ENCODE measurements at regions of chr9 and their contacts with region 1.

Region 1: GRCh38 chr9:132877824-132878694 is at the start of gene AK8:
- DNase-seq: peak in 1 of 2 donors; percentile 82
- H3K4me3 ChIP-seq: peak within 1 kb of the TSS; percentile 78 to 81
- H3K27ac ChIP-seq: peak within 1 kb of the TSS; percentile 64 to 71
- H3K4me1 ChIP-seq: peaks cover 3 to 8% of the 10 kb centered on the region in 2 donors
- H3K27me3 ChIP-seq: no peaks in the 10 kb centered on the region
- CTCF ChIP-seq: no peak
- total RNA-seq, gene AK8: not detected

Region 2: DNA sequence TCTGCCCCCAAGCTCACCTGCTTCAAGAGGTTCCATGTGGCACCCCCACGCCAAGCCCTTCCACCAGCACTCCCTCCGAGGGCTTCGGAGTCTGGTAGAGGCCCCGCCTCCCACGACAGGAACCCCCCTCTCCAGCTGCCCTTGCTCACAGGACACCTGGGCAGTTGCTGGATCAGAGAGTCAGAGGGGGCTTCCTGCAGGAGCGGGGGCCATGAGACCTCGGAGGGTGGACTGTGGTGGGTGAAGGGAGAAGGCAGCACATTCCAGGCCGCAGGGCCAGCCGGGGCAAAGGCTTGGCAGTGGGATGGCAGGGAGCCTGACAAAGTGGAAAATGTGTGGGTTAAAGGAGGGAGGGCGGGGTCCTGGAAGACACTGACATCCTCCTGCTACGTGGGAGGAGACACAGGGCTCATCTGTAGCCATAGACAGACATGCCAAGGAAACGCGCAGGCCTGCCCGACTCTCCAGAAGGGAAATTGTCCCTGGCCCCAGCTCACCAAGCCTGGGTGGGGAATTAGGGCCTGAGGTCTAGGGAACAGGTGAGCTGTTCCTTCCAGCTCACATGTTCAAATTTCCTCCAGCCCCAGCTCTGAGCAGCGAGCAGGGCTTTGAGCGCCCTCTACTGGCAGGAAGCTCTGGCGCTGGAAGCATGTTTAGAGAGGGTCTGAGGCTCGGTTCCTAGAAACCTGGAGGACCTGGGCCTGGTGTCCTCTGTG is 642.0 kb before region 1 on chr9:
- intact Hi-C with region 1: no loop called
- DNase-seq: peak in 1 of 2 donors; percentile 84
- H3K4me3 ChIP-seq: no peak overlapping the region
- H3K27ac ChIP-seq: no peak overlapping the region
- H3K4me1 ChIP-seq: peaks cover 0 to 5% of the 10 kb centered on the region in 2 donors
- H3K27me3 ChIP-seq: no peaks in the 10 kb centered on the region
- CTCF ChIP-seq: peak; percentile 73 to 97 (median 85)

Region 3: DNA sequence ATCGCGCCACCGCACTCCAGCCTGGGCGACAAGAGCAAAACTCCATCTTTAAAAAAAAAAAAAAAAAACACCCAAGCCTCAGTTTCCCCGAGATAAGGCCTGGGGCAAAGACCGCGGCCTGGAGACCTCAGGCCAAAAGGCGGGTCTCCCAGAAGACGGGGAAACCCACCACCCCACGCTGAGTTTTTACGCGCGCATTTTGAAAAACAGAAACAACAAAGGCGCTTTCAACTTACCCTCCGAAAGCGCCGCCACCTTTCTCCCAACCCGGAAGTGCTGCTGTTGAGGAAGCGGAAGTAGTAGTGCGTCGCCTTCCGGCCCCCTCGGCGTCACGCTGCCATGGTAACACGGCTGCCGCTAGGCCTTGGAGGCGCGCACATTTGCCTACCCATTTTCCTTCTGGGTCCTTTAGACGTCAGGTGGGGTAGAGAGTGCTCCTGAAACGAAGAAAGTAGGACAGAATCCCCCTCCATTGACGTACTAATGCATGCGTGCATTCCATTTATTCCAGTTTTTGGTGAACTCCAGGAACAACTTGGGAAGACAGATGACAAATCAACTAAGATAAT is 471.4 kb before region 1 on chr9 and contains the start of gene TTF1:
- intact Hi-C with region 1: loop called (anchors 5 kb)
- DNase-seq: peak; percentile 38 to 94
- H3K4me3 ChIP-seq: peak within 1 kb of the TSS; percentile 69 to 90
- H3K27ac ChIP-seq: peak within 1 kb of the TSS in 1 of 2 donors; percentile 10
- H3K4me1 ChIP-seq: peaks cover 14 to 20% of the 10 kb centered on the region in 2 donors
- H3K27me3 ChIP-seq: no peaks in the 10 kb centered on the region
- CTCF ChIP-seq: no peak
- total RNA-seq, gene TTF1: 2.3 TPM

Region 4: DNA sequence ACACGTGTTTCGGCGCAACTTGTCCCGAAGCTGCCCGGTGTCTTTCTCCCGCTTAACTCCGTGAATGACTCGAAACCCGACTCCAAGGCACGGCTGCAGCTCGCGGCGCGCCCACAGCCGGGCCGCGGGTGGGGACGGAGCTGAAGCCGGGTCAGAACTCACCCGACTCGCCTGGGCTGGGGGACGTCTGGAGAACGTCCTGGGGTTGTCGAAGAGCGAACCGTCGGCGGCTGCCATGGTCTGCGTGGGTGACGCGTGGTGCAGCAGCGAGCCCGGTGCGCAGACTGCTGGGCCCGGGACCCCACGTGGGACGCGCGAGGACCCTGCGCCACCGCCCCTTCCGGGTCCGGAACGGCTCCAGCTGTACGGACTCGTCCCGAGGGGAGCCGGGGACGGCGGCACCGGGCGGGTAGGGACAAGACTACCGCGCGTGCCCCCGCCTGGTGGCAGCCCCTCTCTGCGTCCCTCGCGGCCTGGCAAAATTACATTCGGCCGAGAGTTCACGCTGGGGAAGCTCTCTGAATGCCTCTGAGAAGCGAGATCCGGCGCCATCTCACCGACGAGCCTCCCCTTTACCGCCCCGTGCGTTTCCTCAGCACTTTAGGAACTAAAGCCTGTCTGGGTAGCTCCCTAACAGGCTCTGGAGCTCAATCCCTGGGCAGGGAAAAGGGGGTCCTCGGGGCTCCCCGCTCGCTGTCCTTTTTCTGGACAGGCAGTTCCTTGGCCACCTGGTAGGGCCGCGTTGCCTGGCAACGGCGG is 208.2 kb before region 1 on chr9 and contains the start of gene DDX31:
- intact Hi-C with region 1: loop called (anchors 1 kb)
- DNase-seq: peak; percentile 21 to 89
- H3K4me3 ChIP-seq: peak within 1 kb of the TSS; percentile 83 to 100
- H3K27ac ChIP-seq: peak within 1 kb of the TSS; percentile 93 to 99
- H3K4me1 ChIP-seq: peaks cover 0 to 19% of the 10 kb centered on the region in 2 donors
- H3K27me3 ChIP-seq: no peaks in the 10 kb centered on the region
- CTCF ChIP-seq: no peak
- total RNA-seq, gene DDX31: 20.4 TPM

Region 5: DNA sequence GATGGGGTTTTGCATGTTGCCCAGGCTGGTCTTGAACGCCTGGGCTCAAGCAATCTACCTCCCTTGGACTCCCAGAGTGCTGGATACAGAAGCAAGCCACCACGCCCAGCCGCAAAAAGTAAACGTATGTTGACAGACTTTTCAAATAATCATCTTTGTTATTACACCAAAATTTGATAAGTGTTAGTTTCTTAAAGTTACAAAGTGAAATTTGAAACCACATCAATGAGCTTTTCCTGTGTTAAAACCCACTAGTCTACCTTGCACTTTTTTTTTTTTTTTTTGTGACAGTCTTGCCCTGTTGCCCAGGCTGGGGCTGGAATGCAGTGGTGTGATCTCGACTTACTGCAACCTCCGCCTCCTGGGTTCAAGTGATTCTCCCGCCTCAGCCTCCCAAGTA is 30.6 kb after region 1 on chr9:
- intact Hi-C with region 1: no loop called
- DNase-seq: no peak
- H3K4me3 ChIP-seq: no peak overlapping the region
- H3K27ac ChIP-seq: no peak overlapping the region
- H3K4me1 ChIP-seq: no peaks in the 10 kb centered on the region
- H3K27me3 ChIP-seq: no peaks in the 10 kb centered on the region
- CTCF ChIP-seq: no peak

Region 6: DNA sequence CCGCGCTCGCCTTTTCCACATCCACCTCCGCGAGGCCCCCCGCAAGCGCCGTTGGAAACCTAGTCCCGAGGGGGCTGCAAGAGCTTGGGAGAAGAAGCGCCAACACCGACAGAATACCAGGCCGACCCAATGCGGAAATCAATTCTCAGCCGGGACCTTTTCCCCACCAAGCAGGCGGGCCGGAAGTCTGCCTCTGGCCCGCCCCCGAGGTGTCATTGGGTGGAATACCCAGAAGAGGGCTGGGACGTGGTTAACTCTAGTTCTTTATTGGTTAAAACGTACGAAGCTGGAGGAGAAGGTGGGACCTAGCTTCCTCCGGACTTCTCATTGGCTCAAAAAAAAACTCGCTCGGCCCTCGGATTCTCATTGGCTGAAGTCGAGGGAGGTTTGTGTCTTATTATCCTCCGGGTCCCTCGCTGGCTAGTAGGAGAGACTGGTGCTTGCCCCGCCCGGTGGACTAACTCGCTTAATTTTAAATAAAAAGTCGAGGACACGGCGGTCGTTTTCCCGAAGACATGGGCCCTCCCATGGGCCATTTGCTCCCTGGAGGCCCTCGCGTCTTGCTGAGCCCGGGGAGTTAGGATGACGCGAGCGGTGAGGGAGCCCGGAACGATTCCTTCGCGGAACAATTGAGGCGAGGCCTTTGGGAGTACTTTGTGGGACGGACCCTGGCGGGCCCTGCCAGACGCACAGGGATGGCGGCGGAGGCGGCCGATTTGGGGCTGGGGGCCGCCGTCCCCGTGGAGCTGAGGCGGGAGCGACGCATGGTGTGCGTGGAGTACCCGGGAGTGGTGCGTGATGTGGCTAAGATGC is 152.5 kb after region 1 on chr9 and contains the start of gene GTF3C5:
- intact Hi-C with region 1: loop called (anchors 1 kb)
- DNase-seq: peak; percentile 83 to 97
- H3K4me3 ChIP-seq: peak within 1 kb of the TSS; percentile 86 to 96
- H3K27ac ChIP-seq: peak within 1 kb of the TSS; percentile 85 to 91
- H3K4me1 ChIP-seq: peaks cover 10 to 23% of the 10 kb centered on the region in 2 donors
- H3K27me3 ChIP-seq: no peaks in the 10 kb centered on the region
- CTCF ChIP-seq: no peak
- total RNA-seq, gene GTF3C5: 25.9 TPM

Region 7: DNA sequence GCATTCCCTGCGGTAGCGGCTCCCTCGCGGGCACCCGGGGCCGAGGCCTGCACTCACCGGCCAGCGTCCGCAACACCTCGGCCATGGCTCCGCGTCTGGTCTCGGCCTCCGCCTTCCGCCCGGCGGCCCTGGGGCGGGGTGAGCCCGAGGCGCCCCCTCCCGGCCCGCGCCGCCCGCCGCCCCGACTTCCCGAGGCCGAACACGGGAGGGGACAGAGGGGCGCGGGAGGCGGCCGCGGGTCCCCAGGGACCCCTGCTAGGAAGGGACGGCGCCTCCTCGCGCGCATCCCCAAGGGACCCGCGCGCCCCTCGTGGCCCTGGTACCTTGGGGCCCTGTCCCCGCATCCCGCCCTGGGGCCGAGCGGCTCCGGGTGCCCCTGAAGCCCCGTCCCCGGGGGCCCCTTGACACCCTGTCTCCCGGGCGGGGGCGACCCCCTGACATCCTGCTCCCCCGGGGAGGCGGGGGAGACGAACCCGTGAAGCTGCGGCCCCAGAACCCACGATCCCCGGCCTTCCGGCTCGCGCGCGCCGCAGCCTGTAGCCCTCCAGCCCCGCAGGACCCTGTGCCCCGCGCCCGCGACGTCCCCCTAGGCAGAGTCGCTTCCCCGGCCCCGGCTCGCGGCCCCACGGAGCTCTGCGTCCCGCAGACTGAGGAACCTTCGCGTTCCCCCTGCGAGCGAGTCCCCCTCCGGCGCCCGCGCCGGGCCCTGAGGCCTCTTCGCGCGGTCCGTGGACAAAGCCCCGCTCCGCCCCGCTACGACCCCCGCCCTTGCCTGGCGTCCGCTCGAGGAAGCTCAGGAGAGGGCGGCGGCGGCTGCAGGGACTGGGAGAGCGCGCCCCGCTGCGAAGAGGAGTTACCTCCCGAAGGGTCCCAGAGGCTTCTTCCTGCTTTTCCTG is 397.3 kb after region 1 on chr9 and contains the start of gene ABO:
- intact Hi-C with region 1: no loop called
- DNase-seq: no peak
- H3K4me3 ChIP-seq: peak within 1 kb of the TSS; percentile 47 to 51
- H3K27ac ChIP-seq: no peak within 1 kb of the TSS
- H3K4me1 ChIP-seq: no peaks in the 10 kb centered on the region
- H3K27me3 ChIP-seq: peaks cover 8% of the 10 kb centered on the region
- CTCF ChIP-seq: no peak
- total RNA-seq, gene ABO: 4.8 TPM

Measured in ascending aorta (tissue), 2 donors.